ENCODE measurements at regions of chr12 and their contacts with region 1.

Region 1: GRCh38 chr12:3299929-3300832 is 190.8 kb upstream of the PRMT8 start:
- DNase-seq: peak; percentile 67 to 88 (median 69)
- H3K4me3 ChIP-seq: peak overlapping the region in 1 of 3 experiments; percentile 50
- H3K4me3 Mint-ChIP-seq: peak overlapping the region; percentile 62 to 80
- H3K27ac ChIP-seq: no peak overlapping the region
- H3K27ac Mint-ChIP-seq: peak overlapping the region in 6 of 7 donors; percentile 54 to 88 (median 80)
- H3K4me1 ChIP-seq: peaks cover 7 to 10% of the 10 kb centered on the region in 2 donors
- H3K4me1 Mint-ChIP-seq: peaks cover 11% of the 10 kb centered on the region
- H3K27me3 ChIP-seq: peaks cover 0 to 2% of the 10 kb centered on the region in 2 donors
- H3K27me3 Mint-ChIP-seq: peaks cover 10 to 23% (median 17%) of the 10 kb centered on the region in 3 donors
- CTCF ChIP-seq: peak; percentile 97

Region 2: DNA sequence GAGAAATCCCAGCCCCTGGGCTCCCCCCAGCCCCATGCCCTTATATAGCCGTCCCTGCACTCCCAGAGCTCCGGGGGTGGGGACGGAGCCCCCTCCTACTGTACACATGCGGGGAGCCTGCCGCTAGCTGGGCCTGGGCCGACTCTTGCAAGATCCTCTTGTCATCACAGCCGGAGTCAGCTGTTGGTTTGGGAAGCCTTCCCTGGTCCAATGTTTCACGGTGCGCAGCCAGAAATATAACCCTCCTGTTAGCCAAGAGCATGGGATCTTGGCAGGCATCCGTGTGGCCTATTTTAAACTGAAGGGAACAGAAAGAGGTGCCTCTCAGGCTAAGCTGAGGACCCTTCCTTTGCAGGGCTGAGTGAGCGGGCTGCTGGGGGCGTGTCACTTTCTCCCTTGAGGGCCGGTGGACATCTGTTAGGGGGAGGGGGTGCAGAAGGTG is 47.7 kb before region 1 on chr12:
- intact Hi-C with region 1: no loop called
- DNase-seq: no peak
- H3K4me3 ChIP-seq: no peak overlapping the region
- H3K4me3 Mint-ChIP-seq: no peak overlapping the region
- H3K27ac ChIP-seq: no peak overlapping the region
- H3K27ac Mint-ChIP-seq: no peak overlapping the region
- H3K4me1 ChIP-seq: peaks cover 33 to 37% of the 10 kb centered on the region in 2 donors
- H3K4me1 Mint-ChIP-seq: peaks cover 36% of the 10 kb centered on the region
- H3K27me3 ChIP-seq: no peaks in the 10 kb centered on the region
- H3K27me3 Mint-ChIP-seq: peaks cover 3 to 10% (median 9%) of the 10 kb centered on the region in 3 donors
- CTCF ChIP-seq: no peak

Region 3: GRCh38 chr12:3263939-3264922 is 36.0 kb before region 1 on chr12:
- intact Hi-C with region 1: no loop called
- DNase-seq: no peak
- H3K4me3 ChIP-seq: no peak overlapping the region
- H3K4me3 Mint-ChIP-seq: no peak overlapping the region
- H3K27ac ChIP-seq: no peak overlapping the region
- H3K27ac Mint-ChIP-seq: no peak overlapping the region
- H3K4me1 ChIP-seq: no peaks in the 10 kb centered on the region
- H3K4me1 Mint-ChIP-seq: peaks cover 10% of the 10 kb centered on the region
- H3K27me3 ChIP-seq: peaks cover 0 to 5% of the 10 kb centered on the region in 2 donors
- H3K27me3 Mint-ChIP-seq: peaks cover 8 to 28% (median 18%) of the 10 kb centered on the region in 3 donors
- CTCF ChIP-seq: no peak

Region 4: DNA sequence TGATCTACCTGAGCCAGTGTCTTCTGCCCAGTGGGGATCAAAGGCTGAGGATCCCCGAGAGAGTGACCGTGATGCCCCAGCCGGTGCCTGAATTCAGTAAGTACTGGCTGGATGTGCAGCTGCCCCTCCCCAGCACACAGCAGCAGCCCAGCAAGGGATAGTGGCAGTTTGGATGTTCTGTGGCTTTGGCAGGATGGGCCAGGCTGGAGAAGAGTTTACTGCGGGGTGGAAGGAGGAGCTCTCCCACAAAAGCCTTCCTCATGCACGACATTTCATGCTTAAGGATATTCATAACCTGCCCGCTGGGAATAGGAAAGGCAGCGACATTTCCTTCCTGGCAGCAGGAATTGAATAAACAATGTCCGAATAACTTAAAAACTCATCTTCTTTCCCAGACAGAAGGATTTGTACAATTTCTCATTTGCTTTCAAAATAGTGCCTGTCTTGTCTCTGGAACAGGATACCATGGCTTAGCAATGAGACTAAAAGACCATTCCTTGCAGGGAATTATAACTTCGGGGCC is 55.3 kb after region 1 on chr12:
- intact Hi-C with region 1: no loop called
- DNase-seq: no peak
- H3K4me3 ChIP-seq: no peak overlapping the region
- H3K4me3 Mint-ChIP-seq: no peak overlapping the region
- H3K27ac ChIP-seq: no peak overlapping the region
- H3K27ac Mint-ChIP-seq: no peak overlapping the region
- H3K4me1 ChIP-seq: no peaks in the 10 kb centered on the region
- H3K4me1 Mint-ChIP-seq: no peaks in the 10 kb centered on the region
- H3K27me3 ChIP-seq: peaks cover 2 to 11% of the 10 kb centered on the region in 2 donors
- H3K27me3 Mint-ChIP-seq: peaks cover 2 to 11% (median 2%) of the 10 kb centered on the region in 3 donors
- CTCF ChIP-seq: no peak

Region 5: GRCh38 chr12:3803865-3804472 is 503.8 kb after region 1 on chr12:
- intact Hi-C with region 1: loop called (anchors 2 kb)
- DNase-seq: peak; percentile 46 to 64 (median 64)
- H3K4me3 ChIP-seq: no peak overlapping the region
- H3K4me3 Mint-ChIP-seq: no peak overlapping the region
- H3K27ac ChIP-seq: no peak overlapping the region
- H3K27ac Mint-ChIP-seq: peak overlapping the region in 1 of 7 donors; percentile 30
- H3K4me1 ChIP-seq: no peaks in the 10 kb centered on the region
- H3K4me1 Mint-ChIP-seq: no peaks in the 10 kb centered on the region
- H3K27me3 ChIP-seq: no peaks in the 10 kb centered on the region
- H3K27me3 Mint-ChIP-seq: no peaks in the 10 kb centered on the region
- CTCF ChIP-seq: peak; percentile 82

Measured in CD14-positive monocyte (primary cell).